ENCODE measurements at regions of chr12 and their contacts with region 1.

Region 1: GRCh38 chr12:14769969-14770495 is 33.2 kb downstream of the WBP11 start:
- DNase-seq: peak; percentile 95
- H3K4me3 ChIP-seq: peak overlapping the region; percentile 81
- H3K27ac ChIP-seq: peak overlapping the region; percentile 95
- H3K4me1 ChIP-seq: peaks cover 47% of the 10 kb centered on the region
- CTCF ChIP-seq: peak; percentile 80

Region 2: DNA sequence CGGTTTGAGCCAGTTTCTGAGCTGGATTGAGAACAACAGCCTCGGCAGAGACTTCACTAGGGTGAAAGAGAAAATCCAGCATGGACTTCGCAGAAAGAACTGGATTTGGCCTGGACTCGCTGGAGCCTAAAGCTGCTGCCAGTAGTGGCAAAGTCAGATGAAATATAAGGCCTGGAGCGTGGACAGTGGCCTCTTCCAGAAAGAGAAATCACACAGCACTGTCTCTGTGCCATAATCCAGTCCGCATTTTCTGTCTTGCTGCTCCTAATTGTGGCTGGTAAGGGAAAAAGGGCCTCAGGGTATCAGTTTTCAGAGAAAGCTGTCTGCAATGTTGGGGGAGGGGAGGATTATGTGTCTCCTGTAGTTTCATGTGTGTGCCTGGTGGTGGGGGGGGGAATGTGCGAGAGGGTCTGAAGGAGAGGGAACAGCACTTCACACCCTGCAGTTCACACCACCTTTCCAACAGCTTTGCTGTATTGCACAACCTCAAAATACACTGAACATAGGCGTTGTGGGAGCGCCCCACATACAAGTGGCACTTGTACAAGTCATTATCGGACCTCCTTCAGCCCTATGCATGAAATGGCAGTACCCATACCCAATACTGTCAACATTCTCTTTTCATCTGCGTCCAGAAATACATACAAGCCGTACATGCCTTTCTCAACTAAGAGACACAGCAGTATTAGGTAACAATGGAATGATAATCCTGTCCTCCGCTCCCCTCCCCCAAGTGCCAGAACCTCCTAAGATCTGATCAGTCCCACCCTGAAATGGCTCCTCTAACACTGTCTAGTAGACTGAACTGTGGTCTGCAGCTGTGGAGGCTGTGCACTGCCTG is 512.1 kb before region 1 on chr12:
- CTCF ChIA-PET with region 1: no interaction called
- POLR2A ChIA-PET with region 1: interaction called, 5 read pairs
- intact Hi-C with region 1: loop called (anchors 10 kb)
- DNase-seq: peak; percentile 99
- H3K4me3 ChIP-seq: peak overlapping the region; percentile 56
- H3K27ac ChIP-seq: peak overlapping the region; percentile 98
- H3K4me1 ChIP-seq: peaks cover 76% of the 10 kb centered on the region
- CTCF ChIP-seq: peak; percentile 23; the same call in 1 of the 2 replicates

Region 3: DNA sequence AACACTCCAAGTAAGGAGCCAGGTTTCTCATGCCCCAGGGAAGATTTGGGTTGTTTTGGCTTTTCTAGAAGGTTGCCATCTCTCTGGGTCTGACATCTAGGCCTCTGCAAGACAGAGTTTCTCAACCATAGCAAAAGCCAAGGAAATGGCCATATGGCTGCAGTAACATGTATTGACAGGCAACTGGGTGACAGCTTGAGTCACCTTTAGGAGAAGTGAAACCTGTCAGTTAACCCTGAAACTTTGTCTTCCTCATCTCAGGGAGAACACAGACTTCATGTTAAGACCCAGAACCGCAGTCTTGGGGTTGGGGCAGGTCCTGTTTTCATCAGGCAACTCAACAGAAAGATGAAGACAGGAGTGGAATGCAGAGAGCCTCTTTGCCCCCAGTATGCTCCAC is 156.3 kb before region 1 on chr12:
- CTCF ChIA-PET with region 1: interaction called, 4 read pairs
- POLR2A ChIA-PET with region 1: interaction called, 28 read pairs
- intact Hi-C with region 1: loop called (anchors 5 kb)
- DNase-seq: peak; percentile 97
- H3K4me3 ChIP-seq: peak overlapping the region; percentile 59
- H3K27ac ChIP-seq: peak overlapping the region; percentile 99
- H3K4me1 ChIP-seq: peaks cover 59% of the 10 kb centered on the region
- CTCF ChIP-seq: no peak

Region 4: GRCh38 chr12:14723763-14724162 is 46.3 kb before region 1 on chr12:
- CTCF ChIA-PET with region 1: no interaction called
- POLR2A ChIA-PET with region 1: interaction called, 8 read pairs
- intact Hi-C with region 1: loop called (anchors 1 kb)
- DNase-seq: peak; percentile 73
- H3K4me3 ChIP-seq: no peak overlapping the region
- H3K27ac ChIP-seq: no peak overlapping the region
- H3K4me1 ChIP-seq: no peaks in the 10 kb centered on the region
- CTCF ChIP-seq: peak; percentile 89

Region 5: GRCh38 chr12:14803011-14803829 is 33.2 kb after region 1 on chr12 and contains the starts of genes C12orf60 and WBP11:
- CTCF ChIA-PET with region 1: interaction called, 5 read pairs
- POLR2A ChIA-PET with region 1: interaction called, 162 read pairs
- intact Hi-C with region 1: loop called (anchors 1 kb)
- DNase-seq: peak; percentile 98
- H3K4me3 ChIP-seq: peak within 1 kb of the TSS; percentile 77
- H3K27ac ChIP-seq: peak within 1 kb of the TSS; percentile 66
- H3K4me1 ChIP-seq: peaks cover 36% of the 10 kb centered on the region
- CTCF ChIP-seq: no peak
- total RNA-seq, gene C12orf60: 2.8 and 3.2 TPM in 2 replicates
- total RNA-seq, gene WBP11: 16.5 and 22.8 TPM in 2 replicates

Region 6: DNA sequence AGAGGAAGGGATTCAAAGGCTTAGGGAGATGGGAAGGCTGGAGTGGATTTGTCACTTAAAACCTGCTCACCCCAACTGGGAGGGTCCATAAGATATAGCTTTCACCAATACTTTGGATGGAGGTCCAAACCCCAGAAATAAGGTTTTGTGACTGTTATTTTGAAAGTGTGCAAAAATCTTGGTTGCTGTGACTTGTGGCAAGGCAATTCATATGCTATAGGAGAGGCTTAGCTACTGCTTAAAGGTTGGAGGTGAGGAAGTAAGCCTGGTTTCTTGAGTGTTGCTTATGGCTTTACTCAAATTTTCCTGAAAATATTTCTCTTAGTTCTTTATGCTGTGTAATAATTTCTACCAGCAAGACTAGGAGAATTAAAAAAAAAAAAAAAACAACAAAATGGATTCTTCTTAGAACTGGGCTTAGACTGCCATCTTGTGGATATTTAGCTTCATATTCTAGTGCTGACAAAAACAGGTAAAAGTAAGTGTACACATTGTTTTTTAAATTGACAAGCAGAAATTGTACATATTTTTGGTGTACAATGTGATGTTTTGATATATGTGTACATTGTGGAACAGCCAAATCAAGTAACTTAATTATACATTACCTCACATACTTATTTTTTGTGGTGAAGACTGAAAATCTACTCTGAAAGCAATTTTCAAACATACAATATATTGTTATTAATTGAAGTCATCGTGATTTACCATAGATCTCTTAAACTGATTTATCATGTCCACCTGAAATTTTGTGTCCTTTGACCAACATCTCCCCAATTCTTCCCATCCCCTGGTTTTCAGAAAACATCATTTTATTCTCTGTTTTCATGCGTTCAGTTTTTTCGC is 225.8 kb after region 1 on chr12:
- CTCF ChIA-PET with region 1: no interaction called
- POLR2A ChIA-PET with region 1: interaction called, 5 read pairs
- intact Hi-C with region 1: loop called (anchors 2 kb)
- DNase-seq: peak; percentile 81
- H3K4me3 ChIP-seq: no peak overlapping the region
- H3K27ac ChIP-seq: no peak overlapping the region
- H3K4me1 ChIP-seq: peaks cover 30% of the 10 kb centered on the region
- CTCF ChIP-seq: peak; percentile 97

Measured in OCI-LY7 (cell line).